Gastrocnemius medialis (tissue), 4 donors: ENCODE measurements at regions of chr2 and their contacts with region 1.

Region 1: DNA sequence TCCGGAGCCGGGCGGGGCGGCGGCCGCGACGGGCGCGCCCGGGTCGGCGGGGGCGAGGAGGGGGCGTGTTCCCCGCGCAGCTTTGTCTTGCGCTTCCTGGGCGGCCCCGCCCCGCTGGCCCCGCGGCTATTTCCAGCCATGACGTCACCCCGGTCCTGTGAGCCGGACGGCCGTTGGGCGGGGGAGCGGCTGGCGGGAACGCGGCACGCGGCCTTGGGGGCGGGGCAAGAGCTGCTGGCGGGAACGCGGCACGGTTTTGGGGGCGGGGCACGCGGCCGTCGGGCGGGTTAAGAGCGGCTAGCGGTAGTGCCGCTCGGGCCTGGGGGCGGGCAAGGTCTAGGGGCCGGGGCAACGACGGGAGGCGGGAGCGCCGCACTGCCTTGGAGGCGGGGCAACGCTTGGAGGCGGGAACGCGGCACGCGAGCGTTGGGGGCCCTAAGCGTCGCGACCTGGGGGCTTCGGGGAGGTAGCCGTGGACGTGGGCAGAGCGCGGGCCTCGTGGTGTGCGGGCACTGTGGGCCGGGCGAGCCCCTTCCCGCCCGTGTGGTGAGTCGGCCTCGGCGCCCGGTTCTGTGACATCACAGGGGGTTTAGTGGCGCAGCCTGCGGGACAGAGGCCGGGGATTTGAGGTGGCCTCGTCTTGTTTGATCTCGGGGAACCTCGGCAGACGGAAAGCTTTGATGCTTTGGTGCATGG is 704 bp downstream of the KLF11 start:
- DNase-seq: peak; percentile 96
- ATAC-seq: peak; percentile 77
- H3K4me3 ChIP-seq: peak overlapping the region; percentile 58 to 69 (median 65)
- H3K27ac ChIP-seq: peak overlapping the region; percentile 94 to 95 (median 94)
- H3K4me1 ChIP-seq: peaks cover 35 to 62% of the 10 kb centered on the region in 2 donors
- H3K27me3 ChIP-seq: no peaks in the 10 kb centered on the region
- CTCF ChIP-seq: no peak
- POLR2A ChIP-seq: peak; percentile 8 to 59

Region 2: DNA sequence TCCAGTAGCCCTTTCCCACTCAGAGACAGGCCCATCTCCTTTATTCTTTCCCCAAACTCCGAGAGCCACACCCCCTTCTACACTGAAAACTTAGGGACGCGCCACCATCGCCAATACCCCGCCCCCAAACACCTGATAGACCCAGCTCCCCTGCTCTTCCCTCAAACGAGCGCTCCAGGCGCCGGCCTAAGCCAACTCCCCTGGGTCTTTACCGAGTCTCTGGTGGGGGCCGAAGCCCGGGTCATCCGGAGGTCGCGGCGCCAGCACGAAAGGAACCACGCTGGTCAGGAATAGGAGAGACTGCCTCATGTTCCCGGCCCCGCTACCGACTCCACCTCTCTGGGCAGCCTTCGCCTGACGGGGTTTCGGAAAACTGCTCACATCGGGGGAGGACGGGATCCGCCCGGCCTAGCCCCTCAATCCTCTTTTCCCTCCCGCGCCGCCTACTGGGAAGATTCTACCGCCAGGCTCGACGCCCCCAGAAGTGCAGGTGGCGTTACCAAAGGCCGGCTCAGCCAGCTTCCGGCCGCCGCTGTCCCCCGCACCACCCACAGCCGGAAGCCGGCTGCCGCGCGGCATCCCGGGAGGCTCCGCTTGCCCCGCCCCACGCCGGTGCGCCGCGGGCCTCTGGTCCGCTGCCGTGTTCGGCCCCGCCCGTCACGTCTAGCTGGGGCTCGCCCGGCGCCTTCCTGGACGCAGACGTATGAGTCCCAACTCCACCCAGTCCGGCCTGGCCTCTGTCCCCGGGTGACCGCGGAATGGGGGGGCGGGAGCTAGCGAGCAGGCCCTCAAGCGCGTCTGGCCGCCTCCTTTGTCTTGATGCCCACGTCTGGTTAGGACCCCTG is 488.5 kb before region 1 on chr2 and contains the start of gene ADAM17:
- in situ Hi-C with region 1: no loop called
- intact Hi-C with region 1: loop called (anchors 5 kb)
- DNase-seq: peak; percentile 96 to 97
- ATAC-seq: peak; percentile 83 to 85
- H3K4me3 ChIP-seq: peak within 1 kb of the TSS; percentile 91 to 98 (median 95)
- H3K27ac ChIP-seq: peak within 1 kb of the TSS; percentile 96 to 99 (median 98)
- H3K4me1 ChIP-seq: peaks cover 48 to 53% of the 10 kb centered on the region in 2 donors
- H3K27me3 ChIP-seq: no peaks in the 10 kb centered on the region
- CTCF ChIP-seq: peak; percentile 49 to 80 (median 68)
- POLR2A ChIP-seq: peak; percentile 86 to 95
- total RNA-seq, gene ADAM17: 13.5 to 27.1 (median 22.0) TPM

Region 3: GRCh38 chr2:9799665-9800632 is 244.1 kb before region 1 on chr2:
- in situ Hi-C with region 1: loop called in 1 of 4 experiments (anchors 25 kb)
- intact Hi-C with region 1: no loop called
- DNase-seq: peak; percentile 62 to 77
- ATAC-seq: peak; percentile 75 to 84
- H3K4me3 ChIP-seq: no peak overlapping the region
- H3K27ac ChIP-seq: peak overlapping the region in 2 of 4 donors; percentile 63 to 72
- H3K4me1 ChIP-seq: peaks cover 20 to 29% of the 10 kb centered on the region in 2 donors
- H3K27me3 ChIP-seq: no peaks in the 10 kb centered on the region
- CTCF ChIP-seq: peak; percentile 89 to 99 (median 92)
- POLR2A ChIP-seq: no peak

Region 4: GRCh38 chr2:9843229-9844035 is 200.6 kb before region 1 on chr2 and contains the start of gene TAF1B:
- in situ Hi-C with region 1: no loop called
- intact Hi-C with region 1: loop called (anchors 5 kb)
- DNase-seq: peak; percentile 61 to 81
- ATAC-seq: peak; percentile 93 to 94
- H3K4me3 ChIP-seq: peak within 1 kb of the TSS; percentile 74 to 97 (median 90)
- H3K27ac ChIP-seq: peak within 1 kb of the TSS; percentile 80 to 95 (median 88)
- H3K4me1 ChIP-seq: peaks cover 17 to 22% of the 10 kb centered on the region in 2 donors
- H3K27me3 ChIP-seq: no peaks in the 10 kb centered on the region
- CTCF ChIP-seq: peak in 1 of 5 experiments; percentile 25
- POLR2A ChIP-seq: peak; percentile 66 to 75
- total RNA-seq, gene TAF1B: 5.0 to 8.4 (median 7.3) TPM

Region 5: GRCh38 chr2:10448208-10448645 is 404.2 kb after region 1 on chr2 and contains the start of gene ODC1:
- in situ Hi-C with region 1: no loop called
- intact Hi-C with region 1: loop called (anchors 2 kb)
- DNase-seq: peak; percentile 88 to 94
- ATAC-seq: peak; percentile 69 to 77
- H3K4me3 ChIP-seq: peak within 1 kb of the TSS; percentile 67 to 90 (median 80)
- H3K27ac ChIP-seq: peak within 1 kb of the TSS; percentile 90 to 98 (median 95)
- H3K4me1 ChIP-seq: peaks cover 30 to 32% of the 10 kb centered on the region in 2 donors
- H3K27me3 ChIP-seq: no peaks in the 10 kb centered on the region
- CTCF ChIP-seq: no peak
- POLR2A ChIP-seq: peak; percentile 83 to 92
- total RNA-seq, gene ODC1: 134 to 339 (median 255) TPM